Activated CD4-positive, alpha-beta memory T cell treated with anti-CD3 and anti-CD28 coated beads for 36 hours (primary cell): ENCODE measurements at regions of chr10 and their contacts with region 1.

Region 1: GRCh38 chr10:102352066-102352715 is 43.3 kb upstream of the NFKB2 start:
- DNase-seq: peak; percentile 77
- H3K4me3 Mint-ChIP-seq: no peak overlapping the region
- H3K27ac Mint-ChIP-seq: no peak overlapping the region
- H3K4me1 Mint-ChIP-seq: peaks cover 4% of the 10 kb centered on the region
- H3K27me3 Mint-ChIP-seq: no peaks in the 10 kb centered on the region

Region 2: DNA sequence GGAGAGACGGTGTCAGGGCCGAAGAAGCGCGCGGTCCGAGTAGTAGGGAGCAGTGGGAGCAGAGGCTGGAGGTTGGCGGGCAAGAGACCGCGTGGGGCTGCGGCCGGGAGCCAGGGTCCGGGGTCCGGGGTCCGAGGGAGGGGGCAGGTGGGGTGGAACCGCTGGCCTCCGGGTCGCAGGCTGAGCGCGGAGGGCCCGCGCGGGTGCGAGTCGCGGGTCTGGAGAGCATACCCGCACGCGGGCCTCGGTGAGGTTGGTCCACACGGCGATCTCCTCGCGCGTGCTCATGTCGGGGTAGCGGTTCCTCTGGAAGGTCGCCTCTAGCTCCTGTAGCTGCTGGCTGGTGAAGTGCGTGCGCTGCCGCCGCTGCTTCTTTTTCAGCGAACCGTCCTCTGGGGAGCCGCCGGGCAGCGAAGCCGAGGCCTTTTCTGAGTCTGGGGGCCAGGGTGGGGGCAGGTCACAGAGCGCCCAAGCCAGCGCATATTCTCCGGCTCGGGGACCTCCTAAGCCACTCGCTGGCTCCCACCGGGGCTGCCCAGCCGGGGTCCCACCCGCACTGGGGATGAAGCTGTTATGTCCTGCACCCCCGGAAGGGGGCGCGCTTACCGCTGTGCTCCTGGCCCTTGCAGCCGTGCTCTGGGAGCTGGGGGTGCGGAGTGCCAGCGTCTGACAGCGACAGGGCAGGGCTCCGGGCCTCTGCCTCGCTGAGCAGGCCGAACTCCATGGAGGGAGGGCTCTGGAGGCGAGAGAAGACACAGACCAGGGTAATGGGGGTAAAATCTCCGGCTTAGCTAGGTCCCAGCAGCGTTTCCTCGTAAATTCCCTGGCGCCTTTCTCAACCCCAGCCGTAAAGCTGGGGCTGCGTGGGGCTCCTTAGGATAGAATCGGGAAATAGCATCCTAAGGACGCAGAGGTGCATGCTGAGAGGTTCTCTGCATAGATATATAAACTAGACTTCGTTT is 120.6 kb before region 1 on chr10:
- CTCF ChIA-PET with region 1: interaction called, 1,053 read pairs
- POLR2A ChIA-PET with region 1: interaction called, 34 read pairs
- intact Hi-C with region 1: loop called (anchors 1 kb)
- DNase-seq: peak; percentile 85
- H3K4me3 Mint-ChIP-seq: peak overlapping the region; percentile 72
- H3K27ac Mint-ChIP-seq: no peak overlapping the region
- H3K4me1 Mint-ChIP-seq: peaks cover 5% of the 10 kb centered on the region
- H3K27me3 Mint-ChIP-seq: peaks cover 32% of the 10 kb centered on the region

Region 3: GRCh38 chr10:102268375-102268888 is 83.8 kb before region 1 on chr10:
- CTCF ChIA-PET with region 1: interaction called, 38 read pairs
- POLR2A ChIA-PET with region 1: no interaction called
- intact Hi-C with region 1: no loop called
- DNase-seq: no peak
- H3K4me3 Mint-ChIP-seq: peak overlapping the region; percentile 41
- H3K27ac Mint-ChIP-seq: peak overlapping the region; percentile 97
- H3K4me1 Mint-ChIP-seq: peaks cover 73% of the 10 kb centered on the region
- H3K27me3 Mint-ChIP-seq: no peaks in the 10 kb centered on the region

Region 4: DNA sequence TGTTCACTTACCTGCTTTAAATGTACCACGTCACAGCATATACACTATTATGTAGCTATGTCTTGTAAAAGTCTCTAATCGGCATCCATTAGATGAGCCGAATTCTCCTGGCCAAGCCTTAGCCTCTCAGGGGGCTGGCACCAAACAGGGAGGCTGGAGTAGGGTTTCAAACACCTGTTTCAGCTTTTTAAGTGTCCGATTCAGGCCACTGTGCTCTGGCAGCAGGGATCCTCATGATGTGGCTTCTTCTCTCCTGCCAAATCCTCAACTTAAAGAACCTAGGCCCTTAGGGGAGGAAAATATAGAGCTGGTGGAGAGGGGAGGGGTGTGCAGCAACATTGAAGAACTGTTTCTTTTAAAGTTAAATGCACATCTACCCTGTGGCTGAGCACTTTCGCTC is 25.2 kb before region 1 on chr10:
- CTCF ChIA-PET with region 1: interaction called, 18 read pairs
- POLR2A ChIA-PET with region 1: interaction called, 4 read pairs
- intact Hi-C with region 1: no loop called
- DNase-seq: no peak
- H3K4me3 Mint-ChIP-seq: no peak overlapping the region
- H3K27ac Mint-ChIP-seq: no peak overlapping the region
- H3K4me1 Mint-ChIP-seq: peaks cover 16% of the 10 kb centered on the region
- H3K27me3 Mint-ChIP-seq: no peaks in the 10 kb centered on the region

Region 5: GRCh38 chr10:102384053-102384452 is 31.9 kb after region 1 on chr10:
- CTCF ChIA-PET with region 1: interaction called, 12 read pairs
- POLR2A ChIA-PET with region 1: no interaction called
- intact Hi-C with region 1: no loop called
- DNase-seq: peak; percentile 37
- H3K4me3 Mint-ChIP-seq: no peak overlapping the region
- H3K27ac Mint-ChIP-seq: no peak overlapping the region
- H3K4me1 Mint-ChIP-seq: peaks cover 4% of the 10 kb centered on the region
- H3K27me3 Mint-ChIP-seq: no peaks in the 10 kb centered on the region

Region 6: GRCh38 chr10:102641880-102642735 is 289.9 kb after region 1 on chr10:
- CTCF ChIA-PET with region 1: no interaction called
- POLR2A ChIA-PET with region 1: no interaction called
- intact Hi-C with region 1: no loop called
- DNase-seq: peak; percentile 99
- H3K4me3 Mint-ChIP-seq: peak overlapping the region; percentile 87
- H3K27ac Mint-ChIP-seq: peak overlapping the region; percentile 95
- H3K4me1 Mint-ChIP-seq: peaks cover 17% of the 10 kb centered on the region
- H3K27me3 Mint-ChIP-seq: no peaks in the 10 kb centered on the region